Common myeloid progenitor, CD34-positive (primary cell): ENCODE measurements at regions of chr18 and their contacts with region 1.

Region 1: GRCh38 chr18:46660955-46661749 is 4.1 kb upstream of the LOXHD1 start:
- DNase-seq: no peak
- H3K4me3 ChIP-seq: no peak overlapping the region
- H3K27ac ChIP-seq: no peak overlapping the region
- H3K4me1 ChIP-seq: peaks cover 0 to 4% (median 0%) of the 10 kb centered on the region in 4 experiments
- H3K27me3 ChIP-seq: peaks cover 0 to 8% (median 0%) of the 10 kb centered on the region in 5 experiments

Region 2: DNA sequence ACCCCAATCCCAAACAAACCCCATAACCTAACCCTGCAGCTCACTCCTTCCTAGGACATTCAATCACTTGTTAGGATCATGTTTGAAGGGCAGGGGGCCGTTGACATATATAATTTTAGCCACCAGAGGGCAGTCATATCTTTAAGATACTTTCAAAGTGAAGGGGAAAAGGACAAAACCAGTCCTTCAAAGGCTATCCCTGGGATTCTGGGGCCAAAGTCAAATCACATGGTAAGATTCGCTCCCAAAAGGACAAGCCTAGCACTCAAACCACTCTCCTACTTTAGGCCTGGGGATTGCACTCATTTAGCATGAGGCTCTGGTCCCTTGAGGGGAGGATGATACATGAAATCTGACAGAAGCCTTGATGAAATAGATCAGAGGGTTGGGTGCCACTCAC is 512.3 kb before region 1 on chr18:
- CTCF ChIA-PET with region 1: interaction called, 10 read pairs
- POLR2A ChIA-PET with region 1: no interaction called
- DNase-seq: peak; percentile 46 to 56 (median 48)
- H3K4me3 ChIP-seq: no peak overlapping the region
- H3K27ac ChIP-seq: no peak overlapping the region
- H3K4me1 ChIP-seq: no peaks in the 10 kb centered on the region
- H3K27me3 ChIP-seq: no peaks in the 10 kb centered on the region

Region 3: GRCh38 chr18:46481048-46481846 is 179.9 kb before region 1 on chr18:
- CTCF ChIA-PET with region 1: interaction called, 13 read pairs
- POLR2A ChIA-PET with region 1: no interaction called
- DNase-seq: peak; percentile 59 to 82 (median 76)
- H3K4me3 ChIP-seq: no peak overlapping the region
- H3K27ac ChIP-seq: no peak overlapping the region
- H3K4me1 ChIP-seq: no peaks in the 10 kb centered on the region
- H3K27me3 ChIP-seq: peaks cover 0 to 39% (median 6%) of the 10 kb centered on the region in 5 experiments

Region 4: GRCh38 chr18:46622999-46623398 is 38.2 kb before region 1 on chr18:
- CTCF ChIA-PET with region 1: interaction called, 21 read pairs
- POLR2A ChIA-PET with region 1: no interaction called
- DNase-seq: peak; percentile 25 to 41 (median 40)
- H3K4me3 ChIP-seq: no peak overlapping the region
- H3K27ac ChIP-seq: no peak overlapping the region
- H3K4me1 ChIP-seq: peaks cover 5 to 42% (median 21%) of the 10 kb centered on the region in 4 experiments
- H3K27me3 ChIP-seq: no peaks in the 10 kb centered on the region

Region 5: GRCh38 chr18:46672062-46672970 is 11.2 kb after region 1 on chr18:
- CTCF ChIA-PET with region 1: interaction called, 23 read pairs
- POLR2A ChIA-PET with region 1: no interaction called
- DNase-seq: peak; percentile 40 to 72 (median 64)
- H3K4me3 ChIP-seq: no peak overlapping the region
- H3K27ac ChIP-seq: no peak overlapping the region
- H3K4me1 ChIP-seq: peaks cover 0 to 3% (median under 1%) of the 10 kb centered on the region in 4 experiments
- H3K27me3 ChIP-seq: peaks cover 0 to 64% (median 16%) of the 10 kb centered on the region in 5 experiments